HCT116 (cell line): ENCODE measurements at regions of chr14 and their contacts with region 1.

Region 1: DNA sequence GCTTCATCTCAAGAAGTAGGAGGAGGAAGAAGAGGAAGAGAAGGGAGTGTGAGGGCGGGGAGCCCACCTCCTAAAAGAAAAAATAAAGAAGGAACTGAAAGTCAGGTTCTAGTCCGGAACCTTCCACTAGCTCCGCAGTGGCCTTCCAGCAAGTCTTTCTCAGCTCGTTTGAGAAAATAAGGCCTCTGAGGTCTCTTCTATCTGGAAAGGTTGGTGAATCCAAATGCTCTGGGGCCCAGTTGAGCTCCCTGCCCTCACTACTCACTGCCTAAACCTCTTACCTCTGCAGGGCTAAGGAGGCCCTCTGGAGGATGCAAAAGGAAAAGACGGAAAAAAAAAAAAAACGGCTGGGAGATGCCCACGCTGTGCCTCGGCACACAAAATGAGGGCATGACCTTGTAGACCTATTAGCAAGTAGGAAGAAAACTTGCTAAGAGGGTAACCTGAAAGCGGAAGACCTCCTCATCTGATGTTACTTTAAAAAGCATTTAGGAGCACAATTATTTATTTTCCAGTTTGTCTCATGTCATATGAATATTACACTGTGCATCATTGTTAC is 35.9 kb downstream of the FBLN5 start:
- DNase-seq: peak; percentile 40
- ATAC-seq: peak; percentile 97
- H3K4me3 ChIP-seq: no peak overlapping the region
- H3K27ac ChIP-seq: no peak overlapping the region
- H3K4me1 ChIP-seq: peaks cover 0 to 12% of the 10 kb centered on the region in 2 experiments; a peak in 3 of 4 replicates
- H3K27me3 ChIP-seq: no peaks in the 10 kb centered on the region
- CTCF ChIP-seq: peak; percentile 69 to 80 (median 77)
- POLR2A ChIP-seq: no peak
- RAD21 ChIP-seq: peak; percentile 83

Region 2: DNA sequence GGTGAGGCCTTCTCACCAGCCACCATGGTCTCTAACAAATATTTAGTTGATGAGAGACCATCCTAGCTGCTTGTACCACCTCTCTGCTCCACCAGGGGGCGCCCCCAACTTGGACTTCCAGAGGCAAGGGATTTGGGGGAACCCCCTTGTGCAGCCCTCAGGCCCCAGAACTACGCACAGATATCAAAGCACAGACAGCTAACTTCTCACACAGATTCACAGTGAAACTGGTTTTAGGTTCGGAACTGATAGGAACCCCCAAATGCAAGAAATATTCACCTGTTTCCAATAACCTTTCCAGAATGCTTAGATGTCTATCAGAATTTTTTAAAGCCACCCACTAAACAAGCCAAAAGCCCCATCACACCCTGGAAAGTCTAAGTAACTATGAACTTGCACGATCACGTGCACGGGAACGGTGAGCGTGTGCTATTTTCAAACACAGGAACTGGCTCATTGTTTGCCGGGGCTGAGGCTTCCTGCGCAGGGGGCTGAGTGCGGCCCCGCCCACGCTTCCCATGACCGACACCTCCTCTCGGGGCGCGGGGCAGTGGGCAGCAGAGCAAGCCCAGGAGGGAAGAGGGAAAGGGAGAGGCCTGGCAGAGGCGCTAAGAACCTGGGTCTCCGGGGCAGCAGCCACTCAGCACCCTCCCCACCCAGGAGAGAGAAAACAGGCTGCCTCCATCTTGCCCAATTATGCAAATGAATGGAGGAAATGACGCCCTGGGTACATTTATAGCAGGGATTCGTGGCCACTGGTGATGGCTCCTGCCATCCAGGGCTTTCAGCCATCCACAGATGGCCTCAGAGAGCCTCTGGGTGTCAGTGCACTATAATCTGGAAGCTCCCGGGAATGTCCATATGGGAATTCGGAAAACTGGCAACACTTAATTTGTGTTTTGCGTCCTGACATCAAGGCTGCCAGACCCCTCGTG is 587.6 kb before region 1 on chr14:
- CTCF ChIA-PET with region 1: interaction called, 9 read pairs
- POLR2A ChIA-PET with region 1: no interaction called
- RAD21 ChIA-PET with region 1: no interaction called
- intact Hi-C with region 1: loop called (anchors 2 kb)
- DNase-seq: peak; percentile 18
- ATAC-seq: peak; percentile 85
- H3K4me3 ChIP-seq: no peak overlapping the region
- H3K27ac ChIP-seq: no peak overlapping the region
- H3K4me1 ChIP-seq: no peaks in the 10 kb centered on the region
- H3K27me3 ChIP-seq: no peaks in the 10 kb centered on the region
- CTCF ChIP-seq: peak; percentile 83 to 98 (median 95)
- POLR2A ChIP-seq: no peak
- RAD21 ChIP-seq: peak; percentile 85

Region 3: DNA sequence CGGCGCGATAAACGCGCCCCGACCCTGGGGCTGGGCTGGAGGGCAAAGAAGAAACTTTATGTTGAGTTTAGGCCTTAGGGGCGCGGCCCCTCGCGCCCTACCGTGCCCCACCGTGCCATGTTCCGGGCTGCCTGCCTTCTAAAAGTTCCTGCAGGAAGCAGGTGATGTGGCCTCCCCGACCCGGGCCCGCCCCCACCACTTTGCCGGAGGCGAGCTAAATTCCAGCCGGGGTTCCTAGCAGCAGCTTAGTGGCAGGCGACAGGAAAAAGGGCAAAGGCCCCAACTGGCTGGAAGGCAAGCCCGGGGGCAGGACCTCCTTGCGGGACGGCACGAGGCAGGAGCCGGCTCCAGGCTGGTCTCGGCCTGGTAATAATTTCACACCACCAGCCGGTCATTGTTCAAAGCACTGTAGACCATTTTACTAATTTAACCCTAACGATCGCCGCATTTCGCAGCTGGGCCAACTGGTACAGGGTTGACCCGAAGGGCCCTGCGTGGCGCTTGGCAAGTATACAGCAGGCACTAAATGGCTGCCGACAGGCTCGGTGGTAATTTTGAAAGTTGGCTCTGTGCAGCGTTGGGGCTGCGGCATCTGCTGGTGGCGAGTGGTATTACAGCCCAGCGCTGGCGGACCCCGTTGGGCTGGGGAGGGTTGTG is 493.0 kb before region 1 on chr14:
- CTCF ChIA-PET with region 1: no interaction called
- POLR2A ChIA-PET with region 1: no interaction called
- RAD21 ChIA-PET with region 1: no interaction called
- intact Hi-C with region 1: loop called (anchors 5 kb)
- DNase-seq: peak; percentile 42
- ATAC-seq: peak; percentile 45
- H3K4me3 ChIP-seq: no peak overlapping the region; a peak in 1 of 4 replicates
- H3K27ac ChIP-seq: peak overlapping the region; percentile 60; the same call in 1 of the 2 replicates
- H3K4me1 ChIP-seq: peaks cover 11 to 29% of the 10 kb centered on the region in 2 experiments
- H3K27me3 ChIP-seq: no peaks in the 10 kb centered on the region
- CTCF ChIP-seq: peak; percentile 63 to 97 (median 93); a peak in 5 of 6 replicates
- POLR2A ChIP-seq: no peak
- RAD21 ChIP-seq: peak; percentile 78

Region 4: DNA sequence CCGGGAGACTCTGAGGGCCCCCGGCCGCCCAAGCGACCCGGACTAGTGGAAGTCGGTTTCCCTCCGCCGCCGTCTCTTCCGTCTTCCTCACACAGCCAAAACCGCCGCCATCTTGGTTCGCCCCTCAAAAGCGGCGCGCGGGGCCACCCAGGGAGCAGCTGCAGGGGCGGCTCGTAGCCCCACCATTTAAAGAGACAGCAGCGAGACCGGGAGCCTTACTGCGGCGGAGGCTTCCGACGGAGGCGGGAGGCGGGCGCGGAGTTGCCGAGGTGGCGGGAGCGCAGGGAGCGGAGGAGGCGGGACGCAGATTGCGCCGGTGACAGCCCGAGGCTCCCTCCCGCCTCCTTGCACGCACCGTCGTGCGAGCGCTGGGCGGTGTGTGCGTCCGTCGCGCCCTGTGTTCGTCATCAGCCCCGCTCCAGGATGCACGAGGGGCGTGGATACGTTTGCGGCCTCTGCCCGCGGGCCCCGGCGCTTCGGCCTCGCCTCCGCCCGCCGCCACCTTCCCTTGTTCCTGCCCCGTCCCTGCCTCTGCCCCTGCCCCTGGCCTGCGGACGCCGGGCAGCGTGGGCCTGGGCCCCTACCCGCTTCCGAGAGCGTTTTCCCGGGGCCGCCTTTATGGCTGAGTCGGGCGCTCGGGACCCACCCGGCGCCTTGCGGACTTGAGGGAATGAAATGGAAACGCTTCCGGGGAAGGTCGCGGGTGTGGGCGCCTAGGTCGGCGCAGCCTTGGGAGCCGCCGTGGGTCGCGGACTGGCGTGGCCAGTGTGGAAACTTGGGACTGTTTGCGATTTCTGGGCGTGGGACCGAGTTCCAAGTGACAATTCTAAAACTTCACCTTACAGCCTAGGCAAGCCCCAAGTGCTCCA is 401.1 kb before region 1 on chr14 and contains the start of gene PPP4R3A:
- CTCF ChIA-PET with region 1: no interaction called
- POLR2A ChIA-PET with region 1: no interaction called
- RAD21 ChIA-PET with region 1: interaction called in 1 of 2 experiments, 4 read pairs
- intact Hi-C with region 1: loop called (anchors 10 kb)
- DNase-seq: peak; percentile 90
- ATAC-seq: peak; percentile 90
- H3K4me3 ChIP-seq: peak within 1 kb of the TSS; percentile 91 to 96
- H3K27ac ChIP-seq: peak within 1 kb of the TSS; percentile 99
- H3K4me1 ChIP-seq: peaks cover 10 to 14% of the 10 kb centered on the region in 2 experiments
- H3K27me3 ChIP-seq: no peaks in the 10 kb centered on the region
- CTCF ChIP-seq: no peak
- POLR2A ChIP-seq: peak; percentile 48
- RAD21 ChIP-seq: no peak
- total RNA-seq, gene PPP4R3A: 67.7 TPM

Region 5: GRCh38 chr14:91649930-91650329 is 261.6 kb before region 1 on chr14:
- CTCF ChIA-PET with region 1: interaction called, 17 read pairs
- POLR2A ChIA-PET with region 1: interaction called, 4 read pairs
- RAD21 ChIA-PET with region 1: interaction called in 1 of 2 experiments, 7 read pairs
- intact Hi-C with region 1: loop called (anchors 2 kb)
- DNase-seq: peak; percentile 26
- ATAC-seq: peak; percentile 70
- H3K4me3 ChIP-seq: no peak overlapping the region
- H3K27ac ChIP-seq: no peak overlapping the region
- H3K4me1 ChIP-seq: no peaks in the 10 kb centered on the region; a peak in 1 of 4 replicates
- H3K27me3 ChIP-seq: no peaks in the 10 kb centered on the region
- CTCF ChIP-seq: peak; percentile 43 to 80 (median 51); a peak in 5 of 6 replicates
- POLR2A ChIP-seq: no peak
- RAD21 ChIP-seq: peak; percentile 88

Region 6: GRCh38 chr14:91947471-91948184 is 36.1 kb after region 1 on chr14 and contains the start of gene FBLN5:
- CTCF ChIA-PET with region 1: no interaction called
- POLR2A ChIA-PET with region 1: no interaction called
- RAD21 ChIA-PET with region 1: no interaction called
- intact Hi-C with region 1: no loop called
- DNase-seq: no peak
- ATAC-seq: peak; percentile 70
- H3K4me3 ChIP-seq: peak within 1 kb of the TSS; percentile 30 to 47
- H3K27ac ChIP-seq: no peak within 1 kb of the TSS
- H3K4me1 ChIP-seq: no peaks in the 10 kb centered on the region; a peak in 1 of 4 replicates
- H3K27me3 ChIP-seq: no peaks in the 10 kb centered on the region
- CTCF ChIP-seq: no peak
- POLR2A ChIP-seq: no peak
- RAD21 ChIP-seq: no peak
- total RNA-seq, gene FBLN5: 3.3 TPM

Region 7: GRCh38 chr14:91968280-91968679 is 56.7 kb after region 1 on chr14:
- CTCF ChIA-PET with region 1: no interaction called
- POLR2A ChIA-PET with region 1: no interaction called
- RAD21 ChIA-PET with region 1: no interaction called
- intact Hi-C with region 1: no loop called
- DNase-seq: no peak
- ATAC-seq: no peak
- H3K4me3 ChIP-seq: no peak overlapping the region
- H3K27ac ChIP-seq: no peak overlapping the region
- H3K4me1 ChIP-seq: no peaks in the 10 kb centered on the region
- H3K27me3 ChIP-seq: no peaks in the 10 kb centered on the region
- CTCF ChIP-seq: no peak
- POLR2A ChIP-seq: no peak
- RAD21 ChIP-seq: no peak